Natural killer cell (primary cell): ENCODE measurements at regions of chr18 and their contacts with region 1.

Region 1: GRCh38 chr18:35143622-35144596 is 96.9 kb upstream of the ZNF397 start:
- DNase-seq: peak in 1 of 2 donors; percentile 67
- ATAC-seq: peak; percentile 71 to 84 (median 78)
- H3K4me3 ChIP-seq: no peak overlapping the region
- H3K4me3 Mint-ChIP-seq: no peak overlapping the region
- H3K27ac ChIP-seq: no peak overlapping the region
- H3K27ac Mint-ChIP-seq: peak overlapping the region; percentile 39 to 63
- H3K4me1 ChIP-seq: peaks cover 4% of the 10 kb centered on the region
- H3K4me1 Mint-ChIP-seq: peaks cover 38 to 46% of the 10 kb centered on the region in 2 donors
- H3K27me3 ChIP-seq: no peaks in the 10 kb centered on the region
- H3K27me3 Mint-ChIP-seq: no peaks in the 10 kb centered on the region
- CTCF ChIP-seq: peak; percentile 57

Region 2: DNA sequence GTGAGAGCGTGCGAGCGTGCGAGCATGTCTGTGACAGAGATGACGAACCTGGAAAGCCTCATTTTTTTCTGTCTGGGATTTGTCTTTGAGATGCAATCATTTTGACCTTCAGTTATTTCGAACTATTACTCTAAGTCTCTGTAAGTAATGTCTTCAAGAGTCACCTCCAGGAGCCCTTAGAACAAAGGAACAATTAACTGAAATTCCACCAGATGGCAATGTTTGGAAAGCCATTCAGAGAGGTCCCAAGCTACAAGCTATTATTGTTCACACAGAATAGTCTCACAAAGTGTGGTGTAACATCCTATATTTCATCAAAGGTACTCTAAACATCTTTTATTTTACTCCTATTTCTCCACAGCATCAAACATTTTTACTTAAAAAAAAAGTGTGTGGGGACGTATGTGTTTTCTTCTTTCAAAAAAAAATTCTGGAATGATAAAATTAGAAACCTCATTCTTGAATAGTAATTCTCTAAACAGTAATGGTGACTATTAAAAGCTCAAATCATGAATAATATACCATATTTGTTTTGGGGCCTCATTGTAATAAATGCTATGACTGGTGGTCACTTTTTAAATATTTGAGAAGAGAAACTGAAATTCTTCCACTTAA is 137.8 kb before region 1 on chr18:
- intact Hi-C with region 1: loop called (anchors 1 kb)
- DNase-seq: peak in 1 of 2 donors; percentile 77
- ATAC-seq: peak; percentile 83 to 99 (median 87)
- H3K4me3 ChIP-seq: no peak overlapping the region
- H3K4me3 Mint-ChIP-seq: no peak overlapping the region
- H3K27ac ChIP-seq: no peak overlapping the region
- H3K27ac Mint-ChIP-seq: no peak overlapping the region
- H3K4me1 ChIP-seq: no peaks in the 10 kb centered on the region
- H3K4me1 Mint-ChIP-seq: no peaks in the 10 kb centered on the region
- H3K27me3 ChIP-seq: no peaks in the 10 kb centered on the region
- H3K27me3 Mint-ChIP-seq: no peaks in the 10 kb centered on the region
- CTCF ChIP-seq: peak; percentile 62

Region 3: GRCh38 chr18:35029770-35030169 is 114.1 kb before region 1 on chr18:
- intact Hi-C with region 1: loop called (anchors 1 kb)
- DNase-seq: peak in 1 of 2 donors; percentile 71
- ATAC-seq: peak; percentile 74 to 87 (median 77)
- H3K4me3 ChIP-seq: peak overlapping the region; percentile 44
- H3K4me3 Mint-ChIP-seq: peak overlapping the region; percentile 94
- H3K27ac ChIP-seq: peak overlapping the region; percentile 90
- H3K27ac Mint-ChIP-seq: peak overlapping the region; percentile 95
- H3K4me1 ChIP-seq: peaks cover 15% of the 10 kb centered on the region
- H3K4me1 Mint-ChIP-seq: peaks cover 51 to 56% of the 10 kb centered on the region in 2 donors
- H3K27me3 ChIP-seq: no peaks in the 10 kb centered on the region
- H3K27me3 Mint-ChIP-seq: no peaks in the 10 kb centered on the region
- CTCF ChIP-seq: peak; percentile 48

Region 4: GRCh38 chr18:35085450-35086380 is 58.2 kb before region 1 on chr18:
- intact Hi-C with region 1: loop called (anchors 2 kb)
- DNase-seq: no peak
- ATAC-seq: peak in 1 of 3 donors; percentile 18
- H3K4me3 ChIP-seq: no peak overlapping the region
- H3K4me3 Mint-ChIP-seq: no peak overlapping the region
- H3K27ac ChIP-seq: no peak overlapping the region
- H3K27ac Mint-ChIP-seq: peak overlapping the region; percentile 44 to 79
- H3K4me1 ChIP-seq: no peaks in the 10 kb centered on the region
- H3K4me1 Mint-ChIP-seq: peaks cover 70 to 75% of the 10 kb centered on the region in 2 donors
- H3K27me3 ChIP-seq: no peaks in the 10 kb centered on the region
- H3K27me3 Mint-ChIP-seq: no peaks in the 10 kb centered on the region
- CTCF ChIP-seq: no peak